ENCODE measurements at regions of chr20 and their contacts with region 1.

Region 1: DNA sequence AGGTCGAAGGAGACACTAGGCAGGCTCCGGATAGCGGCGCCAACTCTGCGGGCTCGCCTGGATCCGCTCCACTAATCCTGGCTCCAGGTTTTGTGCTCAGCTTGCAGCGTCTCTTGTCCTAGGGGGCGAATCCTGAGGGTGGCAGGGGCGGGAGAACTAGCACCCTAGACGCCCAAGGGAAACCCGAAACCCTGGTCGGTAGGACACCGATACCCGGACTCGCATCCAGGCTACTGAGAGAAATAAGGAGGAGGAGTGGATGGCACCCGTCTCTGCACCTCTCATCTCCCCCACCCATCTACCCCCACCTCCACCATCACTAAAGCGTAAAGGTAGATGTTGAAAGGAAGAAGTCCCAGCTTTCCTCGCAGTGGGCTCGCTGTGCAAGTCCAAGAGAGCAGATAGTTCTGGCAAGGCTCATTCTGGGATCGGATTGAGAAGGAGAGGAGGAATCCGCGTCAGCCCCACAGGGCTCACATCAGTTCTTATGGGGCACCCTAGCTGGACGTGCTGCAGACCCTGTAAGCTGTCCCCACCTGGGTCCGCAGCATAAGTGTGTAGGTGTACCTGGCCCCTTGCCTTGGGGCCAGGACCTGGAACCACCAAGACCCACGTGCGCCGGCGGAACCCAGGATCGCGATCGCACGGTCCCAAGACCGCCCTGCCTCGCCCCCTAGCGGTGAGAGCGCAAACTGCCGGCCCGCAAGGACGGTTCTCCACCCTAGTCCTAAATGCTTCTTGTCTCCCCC is 6.9 kb downstream of the SLC32A1 start:
- DNase-seq: peak in 34 of 35 experiments; percentile 44 to 88 (median 68)
- ATAC-seq: peak; percentile 76 to 81 (median 78)
- H3K4me3 ChIP-seq: peak overlapping the region; percentile 52 to 63
- H3K4me3 Mint-ChIP-seq: peak overlapping the region; percentile 63 to 70 (median 65)
- H3K27ac ChIP-seq: no peak overlapping the region
- H3K27ac Mint-ChIP-seq: peak overlapping the region in 1 of 2 donors; percentile 20
- H3K4me1 ChIP-seq: peaks cover 5 to 56% of the 10 kb centered on the region in 2 experiments
- H3K4me1 Mint-ChIP-seq: peaks cover 47 to 52% (median 50%) of the 10 kb centered on the region in 3 donors
- H3K27me3 ChIP-seq: peaks cover 21 to 82% of the 10 kb centered on the region in 2 experiments
- H3K27me3 Mint-ChIP-seq: peaks cover 86 to 97% of the 10 kb centered on the region in 2 donors

Region 2: DNA sequence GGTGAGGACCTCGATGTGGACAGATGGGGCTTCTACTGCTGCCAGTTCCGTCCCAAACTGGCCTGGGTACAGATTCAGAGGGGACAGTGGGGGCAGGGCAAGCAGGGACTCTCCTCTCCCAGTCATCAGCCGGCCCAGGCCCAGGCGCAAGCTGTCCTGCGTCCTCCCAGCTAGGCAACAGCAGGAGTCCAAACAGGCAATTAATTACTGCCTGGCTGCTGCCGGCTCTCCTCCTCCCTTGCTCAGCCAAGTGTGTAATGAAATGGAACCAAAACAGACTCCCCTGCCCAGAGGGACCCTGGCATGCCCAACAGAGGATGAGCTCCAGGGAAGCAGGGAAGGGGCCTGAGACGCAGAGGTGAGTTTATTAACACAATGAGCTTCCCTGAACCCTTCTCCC is 24.7 kb before region 1 on chr20:
- CTCF ChIA-PET with region 1: no interaction called
- POLR2A ChIA-PET with region 1: interaction called in 1 of 2 experiments, 12 read pairs
- DNase-seq: no peak
- ATAC-seq: no peak
- H3K4me3 ChIP-seq: no peak overlapping the region
- H3K4me3 Mint-ChIP-seq: no peak overlapping the region
- H3K27ac ChIP-seq: no peak overlapping the region
- H3K27ac Mint-ChIP-seq: no peak overlapping the region
- H3K4me1 ChIP-seq: no peaks in the 10 kb centered on the region
- H3K4me1 Mint-ChIP-seq: no peaks in the 10 kb centered on the region
- H3K27me3 ChIP-seq: peaks cover 9 to 50% of the 10 kb centered on the region in 2 experiments
- H3K27me3 Mint-ChIP-seq: peaks cover 41 to 50% of the 10 kb centered on the region in 2 donors

Measured in T-cell (primary cell).